ENCODE measurements at regions of chr5 and their contacts with region 1.

Region 1: GRCh38 chr5:157731272-157732129 is at the start of gene THG1L:
- DNase-seq: peak; percentile 99
- ATAC-seq: peak; percentile 95
- H3K4me3 Mint-ChIP-seq: peak within 1 kb of the TSS; percentile 86
- H3K27ac Mint-ChIP-seq: peak within 1 kb of the TSS; percentile 96
- H3K4me1 Mint-ChIP-seq: peaks cover 27% of the 10 kb centered on the region
- H3K27me3 Mint-ChIP-seq: no peaks in the 10 kb centered on the region
- total RNA-seq, gene THG1L: 29.9 to 33.8 TPM

Region 2: DNA sequence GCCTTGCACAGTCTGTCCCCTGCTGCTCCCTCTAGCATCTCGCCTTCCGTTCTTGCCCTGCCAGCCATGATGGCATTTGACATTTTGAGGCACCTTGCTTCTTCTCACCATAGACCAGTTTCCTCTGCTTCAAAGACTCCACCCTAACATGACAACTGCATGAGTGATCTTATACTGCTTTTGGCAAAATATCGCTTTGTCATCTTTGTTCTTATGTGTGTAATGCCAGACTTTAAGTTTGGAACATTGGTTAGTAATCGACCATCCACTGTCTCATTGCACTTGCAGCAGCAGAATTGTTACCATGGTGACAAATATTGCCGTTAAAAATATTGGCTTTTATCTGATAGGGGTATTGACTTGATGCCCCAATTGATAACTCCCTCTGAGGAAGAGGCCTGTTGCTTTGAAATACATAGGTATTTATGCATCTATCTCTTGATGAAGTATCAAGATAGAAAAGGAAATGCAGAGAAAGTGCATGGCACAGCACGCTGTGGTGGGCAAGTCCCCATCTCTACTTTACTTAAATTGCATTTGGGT is 572.2 kb before region 1 on chr5:
- CTCF ChIA-PET with region 1: no interaction called
- POLR2A ChIA-PET with region 1: no interaction called
- intact Hi-C with region 1: loop called in 1 of 2 experiments (anchors 5 kb)
- DNase-seq: peak; percentile 66
- ATAC-seq: peak; percentile 81
- H3K4me3 Mint-ChIP-seq: peak overlapping the region; percentile 64
- H3K27ac Mint-ChIP-seq: peak overlapping the region; percentile 99
- H3K4me1 Mint-ChIP-seq: peaks cover 71% of the 10 kb centered on the region
- H3K27me3 Mint-ChIP-seq: no peaks in the 10 kb centered on the region

Region 3: DNA sequence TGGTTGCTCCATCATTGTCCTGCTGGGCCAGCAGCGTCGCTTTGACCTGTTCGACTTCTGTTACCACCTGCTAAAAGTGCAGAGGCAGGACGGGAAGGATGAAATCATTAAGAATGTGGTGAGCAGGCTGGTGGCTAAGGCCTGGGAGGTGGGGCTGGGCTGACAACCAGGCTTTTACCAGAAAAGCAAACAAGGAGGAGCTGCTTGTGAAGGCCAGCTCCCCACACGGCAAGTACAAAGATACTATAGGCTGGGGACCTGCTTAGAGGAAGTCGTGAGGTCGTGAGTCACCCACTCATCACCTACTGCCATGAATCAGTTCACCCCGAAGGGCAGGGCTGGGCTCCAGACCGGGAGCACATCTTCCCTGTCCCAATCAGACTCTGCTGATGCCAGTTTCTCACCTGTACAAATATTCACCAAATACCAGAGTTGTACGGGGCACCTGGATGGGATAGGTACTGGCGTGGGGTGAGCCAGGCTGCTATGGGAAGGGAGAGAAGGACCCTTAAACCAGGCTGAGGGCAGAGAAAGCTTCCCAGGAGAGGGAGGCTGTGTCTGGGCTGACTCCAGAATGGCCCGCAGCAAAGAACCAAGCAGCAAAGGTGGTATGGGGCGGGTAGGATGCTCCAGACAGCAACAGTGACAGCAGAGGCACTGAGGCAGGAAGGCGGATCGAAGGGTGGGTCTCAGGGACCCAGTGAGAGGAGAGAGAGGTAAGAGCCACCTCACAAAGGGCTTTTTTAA is 340.8 kb before region 1 on chr5:
- CTCF ChIA-PET with region 1: no interaction called
- POLR2A ChIA-PET with region 1: no interaction called
- intact Hi-C with region 1: loop called in 1 of 2 experiments (anchors 1 kb)
- DNase-seq: peak; percentile 88
- ATAC-seq: peak; percentile 98
- H3K4me3 Mint-ChIP-seq: peak overlapping the region; percentile 12
- H3K27ac Mint-ChIP-seq: peak overlapping the region; percentile 96
- H3K4me1 Mint-ChIP-seq: peaks cover 24% of the 10 kb centered on the region
- H3K27me3 Mint-ChIP-seq: no peaks in the 10 kb centered on the region

Region 4: GRCh38 chr5:158140120-158140731 is 408.7 kb after region 1 on chr5:
- CTCF ChIA-PET with region 1: no interaction called
- POLR2A ChIA-PET with region 1: no interaction called
- intact Hi-C with region 1: no loop called
- DNase-seq: no peak
- ATAC-seq: no peak
- H3K4me3 Mint-ChIP-seq: no peak overlapping the region
- H3K27ac Mint-ChIP-seq: no peak overlapping the region
- H3K4me1 Mint-ChIP-seq: no peaks in the 10 kb centered on the region
- H3K27me3 Mint-ChIP-seq: no peaks in the 10 kb centered on the region